ENCODE measurements at regions of chr4 and their contacts with region 1.

Region 1: GRCh38 chr4:102620697-102621497 is 119.7 kb downstream of the NFKB1 start:
- DNase-seq: no peak
- H3K4me3 ChIP-seq: no peak overlapping the region
- H3K27ac ChIP-seq: no peak overlapping the region
- H3K4me1 ChIP-seq: peaks cover 0 to 7% (median 0%) of the 10 kb centered on the region in 3 donors
- H3K27me3 ChIP-seq: no peaks in the 10 kb centered on the region
- CTCF ChIP-seq: peak; percentile 19 to 72 (median 49)
- POLR2A ChIP-seq: no peak

Region 2: GRCh38 chr4:101987623-101988243 is 633.2 kb before region 1 on chr4:
- intact Hi-C with region 1: no loop called
- DNase-seq: no peak
- H3K4me3 ChIP-seq: no peak overlapping the region
- H3K27ac ChIP-seq: no peak overlapping the region
- H3K4me1 ChIP-seq: no peaks in the 10 kb centered on the region
- H3K27me3 ChIP-seq: no peaks in the 10 kb centered on the region
- CTCF ChIP-seq: no peak
- POLR2A ChIP-seq: no peak

Region 3: GRCh38 chr4:102449751-102450352 is 171.0 kb before region 1 on chr4:
- intact Hi-C with region 1: loop called (anchors 10 kb)
- DNase-seq: no peak
- H3K4me3 ChIP-seq: no peak overlapping the region
- H3K27ac ChIP-seq: no peak overlapping the region
- H3K4me1 ChIP-seq: no peaks in the 10 kb centered on the region
- H3K27me3 ChIP-seq: no peaks in the 10 kb centered on the region
- CTCF ChIP-seq: peak; percentile 21 to 71 (median 58)
- POLR2A ChIP-seq: no peak

Region 4: GRCh38 chr4:102466298-102466697 is 154.6 kb before region 1 on chr4:
- intact Hi-C with region 1: no loop called
- DNase-seq: no peak
- H3K4me3 ChIP-seq: no peak overlapping the region
- H3K27ac ChIP-seq: no peak overlapping the region
- H3K4me1 ChIP-seq: no peaks in the 10 kb centered on the region
- H3K27me3 ChIP-seq: no peaks in the 10 kb centered on the region
- CTCF ChIP-seq: no peak
- POLR2A ChIP-seq: no peak

Region 5: GRCh38 chr4:102503831-102504786 is 116.8 kb before region 1 on chr4:
- intact Hi-C with region 1: no loop called
- DNase-seq: no peak
- H3K4me3 ChIP-seq: peak overlapping the region in 3 of 4 donors; percentile 96 to 97 (median 96)
- H3K27ac ChIP-seq: peak overlapping the region in 3 of 4 donors; percentile 36 to 100 (median 99)
- H3K4me1 ChIP-seq: peaks cover 11 to 71% (median 18%) of the 10 kb centered on the region in 3 donors
- H3K27me3 ChIP-seq: no peaks in the 10 kb centered on the region
- CTCF ChIP-seq: no peak
- POLR2A ChIP-seq: no peak

Region 6: GRCh38 chr4:102751941-102752340 is 131.0 kb after region 1 on chr4:
- intact Hi-C with region 1: no loop called
- DNase-seq: no peak
- H3K4me3 ChIP-seq: no peak overlapping the region
- H3K27ac ChIP-seq: no peak overlapping the region
- H3K4me1 ChIP-seq: no peaks in the 10 kb centered on the region
- H3K27me3 ChIP-seq: no peaks in the 10 kb centered on the region
- CTCF ChIP-seq: no peak
- POLR2A ChIP-seq: no peak

Measured in esophagus squamous epithelium (tissue), 5 donors.